ENCODE measurements at regions of chr1 and their contacts with region 1.

Region 1: GRCh38 chr1:200620273-200621131 is at the start of gene KIF14:
- DNase-seq: peak; percentile 78 to 98 (median 87)

Region 2: GRCh38 chr1:200558866-200559459 is 61.5 kb before region 1 on chr1:
- intact Hi-C with region 1: no loop called
- DNase-seq: no peak

Region 3: GRCh38 chr1:200669314-200670241 is 49.1 kb after region 1 on chr1 and contains the start of gene DDX59:
- intact Hi-C with region 1: loop called (anchors 5 kb)
- DNase-seq: peak; percentile 87 to 99 (median 92)

Region 4: GRCh38 chr1:200837931-200838571 is 217.5 kb after region 1 on chr1:
- intact Hi-C with region 1: loop called (anchors 2 kb)
- DNase-seq: no peak

Region 5: GRCh38 chr1:200971955-200972711 is 351.6 kb after region 1 on chr1:
- intact Hi-C with region 1: loop called (anchors 5 kb)
- DNase-seq: peak; percentile 65 to 96 (median 78)

Measured in posterior cingulate gyrus (tissue), 11 donors.